BJ (cell line): ENCODE measurements at regions of chr12 and their contacts with region 1.

Region 1: GRCh38 chr12:2034633-2035430 is 18.0 kb upstream of the CACNA1C start:
- DNase-seq: no peak
- H3K4me3 ChIP-seq: peak overlapping the region; percentile 9; the same call in 1 of the 2 replicates
- H3K27me3 ChIP-seq: peaks cover 32% of the 10 kb centered on the region
- CTCF ChIP-seq: peak; percentile 76

Region 2: DNA sequence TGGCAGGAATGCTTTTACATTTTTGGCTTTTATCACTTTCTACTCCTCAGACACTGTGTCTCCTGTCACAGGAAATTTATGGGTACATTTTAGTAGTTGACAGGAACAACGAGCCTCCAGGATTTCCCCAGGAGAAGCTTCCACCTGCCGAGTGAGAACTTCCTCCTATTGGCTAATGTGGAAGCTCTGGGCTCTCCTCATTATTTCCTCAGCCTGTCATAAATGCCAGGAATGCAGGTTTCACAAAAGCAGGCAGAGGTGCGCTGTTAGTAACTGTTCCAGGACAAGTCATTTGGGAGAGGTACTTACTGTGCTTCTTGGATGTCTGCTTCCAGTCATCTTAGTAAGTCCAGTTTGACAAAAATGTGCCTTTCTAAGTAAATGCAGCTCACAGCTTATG is 11.5 kb before region 1 on chr12:
- CTCF ChIA-PET with region 1: interaction called, 10 read pairs
- POLR2A ChIA-PET with region 1: no interaction called
- DNase-seq: no peak
- H3K4me3 ChIP-seq: no peak overlapping the region
- H3K27me3 ChIP-seq: peaks cover 21% of the 10 kb centered on the region
- CTCF ChIP-seq: no peak

Region 3: GRCh38 chr12:2049604-2050540 is 15.0 kb after region 1 on chr12:
- CTCF ChIA-PET with region 1: interaction called, 37 read pairs
- POLR2A ChIA-PET with region 1: no interaction called
- DNase-seq: no peak
- H3K4me3 ChIP-seq: no peak overlapping the region
- H3K27me3 ChIP-seq: peaks cover 5% of the 10 kb centered on the region
- CTCF ChIP-seq: no peak

Region 4: GRCh38 chr12:2334271-2334670 is 299.4 kb after region 1 on chr12:
- CTCF ChIA-PET with region 1: no interaction called
- POLR2A ChIA-PET with region 1: no interaction called
- DNase-seq: no peak
- H3K4me3 ChIP-seq: no peak overlapping the region
- H3K27me3 ChIP-seq: no peaks in the 10 kb centered on the region
- CTCF ChIP-seq: no peak